ENCODE measurements at regions of chr21 and their contacts with region 1.

Region 1: GRCh38 chr21:25313829-25314228 is 293.5 kb downstream of the MRPL39 start:
- DNase-seq: no peak
- H3K4me3 ChIP-seq: no peak overlapping the region
- H3K4me3 Mint-ChIP-seq: no peak overlapping the region
- H3K27ac Mint-ChIP-seq: no peak overlapping the region
- H3K4me1 ChIP-seq: no peaks in the 10 kb centered on the region
- H3K4me1 Mint-ChIP-seq: no peaks in the 10 kb centered on the region
- H3K27me3 ChIP-seq: no peaks in the 10 kb centered on the region
- H3K27me3 Mint-ChIP-seq: peaks cover 3% of the 10 kb centered on the region
- CTCF ChIP-seq: no peak

Region 2: GRCh38 chr21:25283720-25284119 is 30.1 kb before region 1 on chr21:
- CTCF ChIA-PET with region 1: no interaction called
- POLR2A ChIA-PET with region 1: no interaction called
- intact Hi-C with region 1: loop called (anchors 1 kb)
- DNase-seq: peak in 1 of 2 experiments; percentile 33
- H3K4me3 ChIP-seq: no peak overlapping the region
- H3K4me3 Mint-ChIP-seq: no peak overlapping the region
- H3K27ac Mint-ChIP-seq: no peak overlapping the region
- H3K4me1 ChIP-seq: no peaks in the 10 kb centered on the region
- H3K4me1 Mint-ChIP-seq: no peaks in the 10 kb centered on the region
- H3K27me3 ChIP-seq: no peaks in the 10 kb centered on the region
- H3K27me3 Mint-ChIP-seq: peaks cover 5% of the 10 kb centered on the region
- CTCF ChIP-seq: peak; percentile 22 to 39

Region 3: DNA sequence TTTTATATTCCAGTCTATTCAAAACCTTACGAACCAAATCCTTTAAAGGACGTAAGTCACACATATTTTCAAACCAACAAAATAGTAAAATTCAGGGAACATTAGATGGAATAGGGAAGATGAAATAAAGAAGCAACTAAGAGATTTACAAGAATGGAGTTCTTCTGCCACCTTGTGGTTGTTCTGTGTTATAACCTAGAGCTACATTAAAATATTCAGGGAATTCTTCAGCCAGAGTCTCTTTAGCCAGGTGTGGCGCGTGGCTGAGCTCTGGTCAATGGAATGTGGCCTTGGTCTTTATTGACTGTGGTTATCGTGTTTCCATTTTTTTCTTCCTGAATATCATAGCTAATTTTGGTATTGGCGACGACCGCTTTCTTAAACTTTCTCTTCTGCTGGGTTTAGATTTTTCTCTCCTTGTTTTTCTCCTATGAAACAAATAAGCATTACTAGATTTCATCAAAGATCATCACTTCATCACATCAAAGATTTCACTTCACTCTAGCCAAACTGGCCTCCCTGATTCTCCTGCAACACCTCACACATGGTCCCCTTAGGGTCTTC is 72.2 kb after region 1 on chr21:
- CTCF ChIA-PET with region 1: no interaction called
- POLR2A ChIA-PET with region 1: no interaction called
- intact Hi-C with region 1: no loop called
- DNase-seq: peak; percentile 54 to 64
- H3K4me3 ChIP-seq: no peak overlapping the region
- H3K4me3 Mint-ChIP-seq: no peak overlapping the region
- H3K27ac Mint-ChIP-seq: no peak overlapping the region
- H3K4me1 ChIP-seq: no peaks in the 10 kb centered on the region
- H3K4me1 Mint-ChIP-seq: peaks cover 7% of the 10 kb centered on the region
- H3K27me3 ChIP-seq: no peaks in the 10 kb centered on the region
- H3K27me3 Mint-ChIP-seq: peaks cover 5% of the 10 kb centered on the region
- CTCF ChIP-seq: peak; percentile 42 to 73

Measured in Caco-2 (cell line).